ENCODE measurements at regions of chr13 and their contacts with region 1.

Region 1: DNA sequence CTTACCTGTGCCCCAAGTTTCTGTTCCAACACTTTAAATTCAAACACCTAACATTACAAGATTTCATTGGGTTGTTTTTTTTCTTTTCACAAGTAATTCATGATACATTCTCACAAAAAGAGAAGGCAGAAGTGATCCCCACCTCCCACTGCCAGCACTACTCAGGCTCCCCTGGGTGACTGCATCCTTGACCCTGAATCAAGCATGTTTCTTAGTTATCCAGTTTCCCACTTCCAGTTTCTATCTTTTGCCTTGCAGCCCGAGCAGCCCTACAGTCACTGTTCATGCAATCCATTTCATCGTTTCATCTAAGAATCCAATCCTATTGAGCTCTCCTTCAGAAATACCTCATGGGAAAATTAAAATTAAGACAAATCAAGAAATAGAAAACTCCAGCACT is 61.4 kb downstream of the RNASEH2B start:
- DNase-seq: no peak

Region 2: GRCh38 chr13:50474088-50474662 is 496.8 kb before region 1 on chr13:
- intact Hi-C with region 1: no loop called
- DNase-seq: no peak

Region 3: GRCh38 chr13:50991579-50992521 is 20.9 kb after region 1 on chr13:
- intact Hi-C with region 1: loop called in 1 of 2 experiments (anchors 1 kb)
- DNase-seq: peak; percentile 48

Region 4: DNA sequence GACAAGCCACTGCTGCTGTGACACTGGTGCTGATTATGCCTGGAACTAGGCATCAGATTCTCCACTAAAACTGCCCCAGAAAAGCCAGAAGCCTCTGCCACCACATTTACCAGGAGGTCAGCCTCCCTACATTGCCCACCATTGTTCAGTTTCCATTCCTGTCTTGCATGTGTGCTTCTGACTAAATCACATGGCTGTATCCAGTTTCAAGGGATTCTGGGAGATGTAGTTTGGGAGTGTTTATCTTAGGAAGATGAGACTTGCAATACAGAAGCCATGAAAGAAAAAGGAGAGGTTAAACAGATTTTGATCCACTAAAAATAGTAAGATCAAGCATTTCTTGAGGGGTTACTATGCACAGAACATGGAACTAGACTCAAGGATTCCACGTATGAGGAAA is 327.9 kb after region 1 on chr13:
- intact Hi-C with region 1: no loop called
- DNase-seq: no peak

Region 5: GRCh38 chr13:51632591-51633362 is 661.8 kb after region 1 on chr13:
- intact Hi-C with region 1: no loop called
- DNase-seq: no peak

Region 6: DNA sequence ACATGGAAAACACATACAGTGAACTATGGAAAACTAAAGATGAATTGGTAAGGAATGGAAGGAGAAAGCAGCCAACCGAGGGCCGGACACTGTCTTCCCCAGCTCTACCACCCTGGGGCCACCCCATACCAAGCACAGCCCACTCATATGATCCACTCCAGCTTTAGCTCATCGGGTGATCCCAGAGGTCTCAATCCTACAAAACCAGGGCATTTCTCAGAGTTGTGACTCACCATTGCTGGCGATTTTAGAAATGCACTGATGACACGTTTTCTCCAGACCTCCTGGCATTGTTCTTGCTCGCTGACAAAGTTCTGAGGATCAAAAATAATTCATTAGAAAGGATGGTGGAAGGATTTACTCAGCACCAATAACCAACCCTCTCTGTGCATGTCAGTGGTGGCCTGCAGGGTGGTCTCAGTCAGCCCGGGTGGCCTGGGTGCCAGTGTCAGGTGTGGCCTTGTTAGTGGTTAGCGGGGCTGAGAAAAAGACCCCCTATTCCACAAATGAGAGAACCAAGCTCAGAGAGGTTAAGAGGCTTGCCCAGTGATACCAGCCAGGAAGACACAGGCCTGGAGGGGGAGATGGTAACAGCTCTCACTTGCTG is 867.4 kb after region 1 on chr13:
- intact Hi-C with region 1: no loop called
- DNase-seq: no peak

Measured in posterior vena cava (tissue), 2 donors.